Mammary epithelial cell (primary cell): ENCODE measurements at regions of chr3 and their contacts with region 1.

Region 1: DNA sequence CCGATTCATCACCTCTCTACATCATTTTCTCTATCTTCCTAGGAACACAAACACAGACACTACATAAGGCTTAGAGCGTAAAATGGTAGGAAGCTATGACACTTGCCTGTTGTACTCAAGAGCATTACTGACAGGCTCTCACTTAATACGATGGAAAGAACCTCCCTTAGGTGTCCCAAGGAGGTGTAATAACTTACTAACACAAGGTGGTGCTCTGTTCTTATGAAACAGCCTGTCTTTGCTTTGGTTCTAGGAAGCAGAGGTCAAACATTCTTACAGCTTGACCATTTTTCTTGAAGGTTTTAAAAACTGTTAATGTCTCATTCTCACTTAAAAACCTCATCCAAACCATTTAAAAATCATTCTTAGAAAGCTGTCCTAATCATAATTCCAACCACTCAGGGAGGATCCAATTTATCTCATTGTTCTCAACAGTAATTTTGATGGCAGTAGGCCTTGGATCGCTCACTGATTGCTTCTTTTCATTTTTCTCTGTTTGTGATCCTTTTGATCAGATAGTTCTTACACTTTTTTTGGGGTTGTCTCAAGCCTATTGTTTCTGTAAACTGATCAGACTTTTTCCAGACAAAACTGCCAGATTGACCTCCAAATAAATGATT is 317.8 kb upstream of the AGTR1 start:
- DNase-seq: peak; percentile 35
- H3K4me3 ChIP-seq: no peak overlapping the region
- H3K27ac ChIP-seq: no peak overlapping the region
- H3K4me1 ChIP-seq: no peaks in the 10 kb centered on the region
- H3K27me3 ChIP-seq: no peaks in the 10 kb centered on the region
- CTCF ChIP-seq: peak; percentile 35 to 56

Region 2: DNA sequence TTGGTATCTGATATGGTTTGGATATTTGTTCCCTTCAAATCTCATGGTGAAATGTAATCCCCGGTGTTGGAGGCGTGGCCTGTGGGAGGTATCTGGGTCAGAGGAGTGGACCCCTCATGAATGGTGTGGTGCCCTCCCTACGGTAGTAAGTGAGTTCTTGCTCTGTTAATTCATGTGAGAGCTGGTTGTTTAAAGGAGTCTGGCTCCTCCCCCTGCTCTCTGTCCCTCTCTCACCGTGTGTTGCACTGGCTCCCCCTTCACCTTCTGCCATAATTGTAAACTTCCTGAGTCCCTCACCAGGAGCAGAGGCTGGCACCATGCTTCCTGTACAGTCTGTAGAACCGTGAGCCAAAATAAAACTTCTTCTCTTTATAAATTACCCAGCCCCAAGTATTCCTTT is 70.9 kb after region 1 on chr3:
- CTCF ChIA-PET with region 1: no interaction called
- dilution Hi-C with region 1: no loop called
- in situ Hi-C with region 1: no loop called
- intact Hi-C with region 1: no loop called
- DNase-seq: no peak
- H3K4me3 ChIP-seq: no peak overlapping the region
- H3K27ac ChIP-seq: no peak overlapping the region
- H3K4me1 ChIP-seq: no peaks in the 10 kb centered on the region
- H3K27me3 ChIP-seq: no peaks in the 10 kb centered on the region
- CTCF ChIP-seq: no peak

Region 3: DNA sequence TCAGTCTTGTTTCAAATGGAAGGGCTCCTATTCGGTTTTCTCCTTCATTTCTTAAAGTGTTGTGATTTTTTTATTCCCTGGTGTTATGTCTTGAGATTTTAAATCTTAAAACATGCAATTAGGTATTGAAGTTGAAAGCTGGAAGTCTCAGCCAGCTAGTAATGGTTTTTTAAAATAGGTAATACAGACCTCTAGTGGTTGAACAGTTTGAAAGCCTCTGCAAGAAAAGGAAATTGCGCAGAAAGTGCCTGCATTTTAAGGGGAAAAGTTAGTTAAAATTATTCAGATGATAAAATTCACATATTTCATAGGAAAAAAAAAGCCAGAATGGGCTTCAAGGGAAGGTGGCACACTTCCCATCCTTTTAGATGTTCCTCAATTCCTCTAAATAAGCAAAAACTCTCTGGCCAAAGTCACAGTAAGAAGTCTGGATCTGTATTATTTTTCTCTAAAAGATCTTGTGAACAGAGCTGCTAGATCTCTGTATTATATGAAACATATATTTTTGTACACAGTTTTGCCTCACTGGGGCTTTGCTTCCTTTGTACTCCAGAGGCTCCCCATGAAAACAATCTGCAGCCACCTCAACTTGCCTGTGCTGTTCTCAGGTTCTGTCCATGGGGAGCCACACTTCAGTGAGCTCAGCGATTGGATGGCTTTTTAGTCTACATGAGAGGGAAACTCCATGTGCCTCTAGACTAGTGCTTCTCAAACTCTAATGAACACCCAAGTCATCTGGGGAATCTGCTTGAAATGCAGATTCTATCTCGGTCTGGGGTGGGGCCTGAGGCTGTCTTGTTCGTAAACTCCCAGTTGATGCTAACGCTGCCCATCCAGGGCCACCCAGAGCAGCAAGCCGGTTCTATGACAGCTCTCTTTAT is 339.3 kb after region 1 on chr3:
- CTCF ChIA-PET with region 1: no interaction called
- dilution Hi-C with region 1: no loop called
- in situ Hi-C with region 1: no loop called
- intact Hi-C with region 1: loop called (anchors 1 kb)
- DNase-seq: no peak
- H3K4me3 ChIP-seq: no peak overlapping the region
- H3K27ac ChIP-seq: no peak overlapping the region
- H3K4me1 ChIP-seq: no peaks in the 10 kb centered on the region
- H3K27me3 ChIP-seq: peaks cover 2% of the 10 kb centered on the region
- CTCF ChIP-seq: peak in 1 of 2 donors; percentile 39

Region 4: GRCh38 chr3:148861277-148861869 is 481.5 kb after region 1 on chr3:
- CTCF ChIA-PET with region 1: no interaction called
- dilution Hi-C with region 1: no loop called
- in situ Hi-C with region 1: no loop called
- intact Hi-C with region 1: loop called (anchors 10 kb)
- DNase-seq: peak; percentile 26
- H3K4me3 ChIP-seq: no peak overlapping the region
- H3K27ac ChIP-seq: no peak overlapping the region
- H3K4me1 ChIP-seq: no peaks in the 10 kb centered on the region
- H3K27me3 ChIP-seq: no peaks in the 10 kb centered on the region
- CTCF ChIP-seq: peak; percentile 50 to 64